ENCODE measurements at regions of chr12 and their contacts with region 1.

Region 1: GRCh38 chr12:88993651-88994050 is 358.6 kb downstream of the DUSP6 start:
- DNase-seq: peak; percentile 62
- H3K4me3 Mint-ChIP-seq: no peak overlapping the region
- H3K27ac Mint-ChIP-seq: no peak overlapping the region
- H3K4me1 Mint-ChIP-seq: no peaks in the 10 kb centered on the region
- H3K27me3 Mint-ChIP-seq: no peaks in the 10 kb centered on the region
- CTCF ChIP-seq: peak; percentile 55

Region 2: GRCh38 chr12:88111074-88111652 is 882.5 kb before region 1 on chr12:
- CTCF ChIA-PET with region 1: interaction called, 4 read pairs
- POLR2A ChIA-PET with region 1: no interaction called
- intact Hi-C with region 1: loop called (anchors 1 kb)
- DNase-seq: peak; percentile 58
- H3K4me3 Mint-ChIP-seq: peak overlapping the region; percentile 64
- H3K27ac Mint-ChIP-seq: peak overlapping the region; percentile 90
- H3K4me1 Mint-ChIP-seq: peaks cover 10% of the 10 kb centered on the region
- H3K27me3 Mint-ChIP-seq: no peaks in the 10 kb centered on the region
- CTCF ChIP-seq: peak; percentile 29

Region 3: DNA sequence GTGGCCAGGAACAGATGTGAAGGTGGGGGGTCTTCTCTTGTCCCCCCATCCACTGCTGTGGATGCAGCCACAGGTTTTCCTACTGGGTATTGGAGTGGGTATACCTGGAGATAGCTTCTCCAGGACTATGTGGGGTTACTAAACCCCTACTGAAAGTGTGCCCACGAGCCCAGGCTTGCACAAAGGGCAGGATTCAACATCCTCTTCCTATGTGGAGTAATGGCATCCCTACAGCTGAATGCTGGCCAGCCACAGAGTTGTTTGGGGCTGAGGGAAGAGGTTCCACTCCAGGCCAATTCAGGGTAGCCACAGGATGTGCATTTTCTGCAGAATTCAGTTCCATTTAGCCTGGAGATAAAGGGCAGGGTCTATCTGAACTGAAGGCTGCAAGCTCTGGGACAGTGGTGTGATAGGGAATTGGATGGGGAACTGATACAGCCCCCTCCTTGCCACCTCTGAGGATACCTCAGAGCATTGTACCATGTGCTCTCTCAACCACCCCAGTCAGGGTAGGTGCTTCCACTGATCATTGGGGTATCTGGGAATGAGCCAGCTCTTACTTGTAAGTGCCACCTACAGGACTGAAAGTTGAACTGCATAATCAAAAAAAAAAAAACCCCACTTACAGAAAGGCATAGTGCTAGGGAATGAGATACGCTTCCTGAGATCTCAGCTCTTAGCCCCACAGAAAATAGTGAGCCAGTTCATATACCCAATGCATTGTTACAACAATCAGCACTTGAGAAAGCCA is 600.5 kb before region 1 on chr12:
- CTCF ChIA-PET with region 1: interaction called, 5 read pairs
- POLR2A ChIA-PET with region 1: no interaction called
- intact Hi-C with region 1: loop called (anchors 2 kb)
- DNase-seq: peak; percentile 57
- H3K4me3 Mint-ChIP-seq: no peak overlapping the region
- H3K27ac Mint-ChIP-seq: peak overlapping the region; percentile 23
- H3K4me1 Mint-ChIP-seq: peaks cover 17% of the 10 kb centered on the region
- H3K27me3 Mint-ChIP-seq: no peaks in the 10 kb centered on the region
- CTCF ChIP-seq: peak; percentile 52

Region 4: GRCh38 chr12:88633312-88633711 is 360.3 kb before region 1 on chr12:
- CTCF ChIA-PET with region 1: interaction called, 10 read pairs
- POLR2A ChIA-PET with region 1: no interaction called
- intact Hi-C with region 1: loop called (anchors 1 kb)
- DNase-seq: peak; percentile 13
- H3K4me3 Mint-ChIP-seq: no peak overlapping the region
- H3K27ac Mint-ChIP-seq: no peak overlapping the region
- H3K4me1 Mint-ChIP-seq: peaks cover 16% of the 10 kb centered on the region
- H3K27me3 Mint-ChIP-seq: no peaks in the 10 kb centered on the region
- CTCF ChIP-seq: peak; percentile 31

Region 5: GRCh38 chr12:88693837-88694445 is 299.7 kb before region 1 on chr12:
- CTCF ChIA-PET with region 1: no interaction called
- POLR2A ChIA-PET with region 1: no interaction called
- intact Hi-C with region 1: no loop called
- DNase-seq: no peak
- H3K4me3 Mint-ChIP-seq: no peak overlapping the region
- H3K27ac Mint-ChIP-seq: no peak overlapping the region
- H3K4me1 Mint-ChIP-seq: peaks cover 6% of the 10 kb centered on the region
- H3K27me3 Mint-ChIP-seq: no peaks in the 10 kb centered on the region
- CTCF ChIP-seq: no peak

Region 6: DNA sequence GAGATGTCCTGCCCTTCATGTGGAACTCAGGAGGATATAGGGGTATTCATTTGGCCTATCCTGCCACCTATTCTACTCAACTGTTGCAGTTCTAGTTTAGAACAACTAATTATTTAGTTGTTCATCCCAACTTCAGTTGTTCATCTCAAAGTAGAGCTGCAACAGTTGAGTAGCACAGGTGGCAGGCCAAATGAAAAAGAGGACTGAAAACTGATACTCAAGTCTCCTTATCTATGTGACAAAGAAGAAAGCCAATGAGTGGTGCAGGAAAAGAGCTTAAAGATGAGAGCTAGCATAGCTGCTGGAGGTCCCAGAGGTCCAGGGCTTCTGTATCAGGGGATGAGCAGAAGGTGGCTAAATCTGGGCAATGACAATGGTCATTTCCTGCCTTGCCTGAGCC is 264.5 kb before region 1 on chr12:
- CTCF ChIA-PET with region 1: no interaction called
- POLR2A ChIA-PET with region 1: no interaction called
- intact Hi-C with region 1: no loop called
- DNase-seq: no peak
- H3K4me3 Mint-ChIP-seq: no peak overlapping the region
- H3K27ac Mint-ChIP-seq: no peak overlapping the region
- H3K4me1 Mint-ChIP-seq: no peaks in the 10 kb centered on the region
- H3K27me3 Mint-ChIP-seq: no peaks in the 10 kb centered on the region
- CTCF ChIP-seq: no peak

Region 7: GRCh38 chr12:88805692-88806091 is 188.0 kb before region 1 on chr12:
- CTCF ChIA-PET with region 1: no interaction called
- POLR2A ChIA-PET with region 1: no interaction called
- intact Hi-C with region 1: no loop called
- DNase-seq: no peak
- H3K4me3 Mint-ChIP-seq: no peak overlapping the region
- H3K27ac Mint-ChIP-seq: no peak overlapping the region
- H3K4me1 Mint-ChIP-seq: no peaks in the 10 kb centered on the region
- H3K27me3 Mint-ChIP-seq: no peaks in the 10 kb centered on the region
- CTCF ChIP-seq: no peak

Region 8: DNA sequence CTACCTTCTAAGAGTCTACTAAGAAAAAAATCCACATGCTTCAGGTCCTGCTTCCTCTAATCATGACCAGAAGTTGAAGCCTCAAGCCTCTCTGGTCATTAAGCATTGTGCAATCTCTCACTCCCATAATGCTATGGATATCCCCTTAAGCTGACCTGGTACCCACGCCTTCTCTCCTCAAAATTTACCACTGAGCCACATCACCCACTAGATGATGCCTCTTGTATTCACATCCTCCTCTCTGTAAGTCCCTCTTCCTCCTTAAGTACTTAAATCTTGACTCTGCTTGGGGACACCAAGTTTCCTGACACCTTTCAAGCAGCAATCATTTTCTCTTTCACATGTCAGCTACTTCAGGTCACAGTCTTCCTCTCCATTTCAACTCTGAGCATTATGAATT is 521.1 kb after region 1 on chr12:
- CTCF ChIA-PET with region 1: no interaction called
- POLR2A ChIA-PET with region 1: no interaction called
- intact Hi-C with region 1: no loop called
- DNase-seq: no peak
- H3K4me3 Mint-ChIP-seq: no peak overlapping the region
- H3K27ac Mint-ChIP-seq: no peak overlapping the region
- H3K4me1 Mint-ChIP-seq: peaks cover 7% of the 10 kb centered on the region
- H3K27me3 Mint-ChIP-seq: no peaks in the 10 kb centered on the region
- CTCF ChIP-seq: no peak